Head of caudate nucleus (tissue), 42 donors: ENCODE measurements at regions of chr3 and their contacts with region 1.

Region 1: GRCh38 chr3:197959898-197960693 is at the start of gene LMLN:
- DNase-seq: peak; percentile 93 to 99 (median 98)

Region 2: DNA sequence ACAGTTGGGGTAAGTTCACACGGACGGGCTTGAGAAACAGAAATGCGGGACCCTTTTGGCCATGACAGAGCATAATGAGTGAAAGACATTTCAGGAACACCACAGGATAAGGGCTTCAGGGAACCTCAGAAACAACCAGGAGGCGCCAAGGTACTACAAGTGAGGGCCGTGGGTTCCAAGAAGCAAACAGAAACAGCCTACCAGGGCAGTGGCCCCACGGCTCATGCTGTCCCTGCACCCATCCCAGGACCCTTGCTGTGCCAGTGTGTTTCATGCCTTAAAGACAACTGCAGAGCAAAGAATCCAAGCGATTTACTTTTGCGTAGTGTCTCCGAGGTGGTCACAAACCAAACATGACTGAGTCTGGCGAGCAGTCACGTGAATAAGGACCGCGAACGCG is 277.4 kb before region 1 on chr3:
- intact Hi-C with region 1: no loop called
- DNase-seq: no peak

Region 3: GRCh38 chr3:197718880-197719279 is 241.2 kb before region 1 on chr3:
- intact Hi-C with region 1: no loop called
- DNase-seq: no peak

Region 4: GRCh38 chr3:197749601-197750395 is 210.3 kb before region 1 on chr3 and contains the start of gene FYTTD1:
- intact Hi-C with region 1: no loop called
- DNase-seq: peak; percentile 81 to 98 (median 95)

Region 5: GRCh38 chr3:197949754-197950660 is 10.1 kb before region 1 on chr3 and contains the start of gene RPL35A:
- intact Hi-C with region 1: loop called (anchors 1 kb)
- DNase-seq: peak; percentile 76 to 94 (median 86)

Region 6: DNA sequence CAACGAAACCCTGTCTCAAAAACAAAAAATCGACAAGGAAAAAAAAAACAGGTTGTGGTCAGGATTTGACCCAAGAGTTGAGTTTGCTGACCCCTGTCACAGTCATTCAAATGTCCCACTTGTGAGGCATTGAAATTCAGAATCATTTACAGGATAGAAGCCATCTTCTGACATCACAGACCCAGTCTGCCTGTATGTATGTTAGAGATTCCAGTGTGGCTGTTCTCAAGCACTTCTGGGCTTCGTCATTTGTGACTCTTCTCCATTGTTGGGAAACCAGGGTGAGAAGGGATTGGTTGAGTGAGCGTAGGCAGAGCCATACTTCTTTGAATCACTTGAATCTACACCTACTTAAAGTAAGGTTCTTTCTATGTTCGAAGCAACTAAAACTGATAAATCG is 57.0 kb after region 1 on chr3:
- intact Hi-C with region 1: no loop called
- DNase-seq: no peak